Activated B cell treated with CpG ODN at 0.5 μM for 24 hours (primary cell): ENCODE measurements at regions of chr5 and their contacts with region 1.

Region 1: GRCh38 chr5:54310433-54311175 is at the start of gene ARL15:
- DNase-seq: peak; percentile 93
- ATAC-seq: peak; percentile 95
- H3K4me3 Mint-ChIP-seq: peak within 1 kb of the TSS; percentile 97
- H3K27ac Mint-ChIP-seq: peak within 1 kb of the TSS; percentile 91
- H3K4me1 Mint-ChIP-seq: peaks cover 24% of the 10 kb centered on the region
- H3K27me3 Mint-ChIP-seq: peaks cover 4% of the 10 kb centered on the region
- CTCF ChIP-seq: no peak
- total RNA-seq, gene ARL15: 13.0 and 17.5 TPM in 2 replicates

Region 2: GRCh38 chr5:53109443-53110127 is 1201.0 kb before region 1 on chr5 and contains the start of gene MOCS2:
- CTCF ChIA-PET with region 1: interaction called, 4 read pairs
- POLR2A ChIA-PET with region 1: no interaction called
- intact Hi-C with region 1: loop called (anchors 1 kb)
- DNase-seq: peak; percentile 89
- ATAC-seq: peak; percentile 98
- H3K4me3 Mint-ChIP-seq: peak within 1 kb of the TSS; percentile 95
- H3K27ac Mint-ChIP-seq: peak within 1 kb of the TSS; percentile 92
- H3K4me1 Mint-ChIP-seq: peaks cover 28% of the 10 kb centered on the region
- H3K27me3 Mint-ChIP-seq: no peaks in the 10 kb centered on the region
- CTCF ChIP-seq: no peak
- total RNA-seq, gene MOCS2: 16.8 and 17.0 TPM in 2 replicates

Region 3: GRCh38 chr5:54243473-54244080 is 67.0 kb before region 1 on chr5:
- CTCF ChIA-PET with region 1: interaction called, 8 read pairs
- POLR2A ChIA-PET with region 1: interaction called, 4 read pairs
- intact Hi-C with region 1: loop called (anchors 2 kb)
- DNase-seq: no peak
- ATAC-seq: no peak
- H3K4me3 Mint-ChIP-seq: no peak overlapping the region
- H3K27ac Mint-ChIP-seq: no peak overlapping the region
- H3K4me1 Mint-ChIP-seq: peaks cover 2% of the 10 kb centered on the region
- H3K27me3 Mint-ChIP-seq: no peaks in the 10 kb centered on the region
- CTCF ChIP-seq: no peak

Region 4: GRCh38 chr5:54329731-54330709 is 19.4 kb after region 1 on chr5:
- CTCF ChIA-PET with region 1: no interaction called
- POLR2A ChIA-PET with region 1: no interaction called
- intact Hi-C with region 1: no loop called
- DNase-seq: no peak
- ATAC-seq: no peak
- H3K4me3 Mint-ChIP-seq: no peak overlapping the region
- H3K27ac Mint-ChIP-seq: no peak overlapping the region
- H3K4me1 Mint-ChIP-seq: no peaks in the 10 kb centered on the region
- H3K27me3 Mint-ChIP-seq: peaks cover 39% of the 10 kb centered on the region
- CTCF ChIP-seq: no peak

Region 5: DNA sequence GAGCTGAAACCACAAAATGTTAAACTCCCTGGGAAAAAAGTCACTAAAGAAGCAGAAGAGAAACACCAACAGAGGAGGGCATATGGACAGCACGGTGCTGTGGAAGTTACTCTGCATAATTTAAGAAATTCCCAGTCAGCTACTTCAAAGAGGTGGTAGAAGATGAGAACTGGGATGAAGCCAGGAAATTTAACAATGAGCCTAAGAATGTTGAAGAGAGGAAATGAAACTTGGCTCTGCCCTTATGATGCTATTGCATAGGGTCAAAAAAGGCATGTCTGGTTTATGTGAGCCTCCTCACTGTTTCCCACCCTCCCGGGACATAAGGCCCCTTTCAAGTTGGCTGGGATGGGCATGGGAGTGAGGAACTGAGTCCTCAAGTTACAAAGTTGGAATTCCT is 181.6 kb after region 1 on chr5:
- CTCF ChIA-PET with region 1: interaction called, 12 read pairs
- POLR2A ChIA-PET with region 1: interaction called, 7 read pairs
- intact Hi-C with region 1: loop called (anchors 1 kb)
- DNase-seq: no peak
- ATAC-seq: no peak
- H3K4me3 Mint-ChIP-seq: no peak overlapping the region
- H3K27ac Mint-ChIP-seq: no peak overlapping the region
- H3K4me1 Mint-ChIP-seq: no peaks in the 10 kb centered on the region
- H3K27me3 Mint-ChIP-seq: peaks cover 9% of the 10 kb centered on the region
- CTCF ChIP-seq: no peak

Region 6: DNA sequence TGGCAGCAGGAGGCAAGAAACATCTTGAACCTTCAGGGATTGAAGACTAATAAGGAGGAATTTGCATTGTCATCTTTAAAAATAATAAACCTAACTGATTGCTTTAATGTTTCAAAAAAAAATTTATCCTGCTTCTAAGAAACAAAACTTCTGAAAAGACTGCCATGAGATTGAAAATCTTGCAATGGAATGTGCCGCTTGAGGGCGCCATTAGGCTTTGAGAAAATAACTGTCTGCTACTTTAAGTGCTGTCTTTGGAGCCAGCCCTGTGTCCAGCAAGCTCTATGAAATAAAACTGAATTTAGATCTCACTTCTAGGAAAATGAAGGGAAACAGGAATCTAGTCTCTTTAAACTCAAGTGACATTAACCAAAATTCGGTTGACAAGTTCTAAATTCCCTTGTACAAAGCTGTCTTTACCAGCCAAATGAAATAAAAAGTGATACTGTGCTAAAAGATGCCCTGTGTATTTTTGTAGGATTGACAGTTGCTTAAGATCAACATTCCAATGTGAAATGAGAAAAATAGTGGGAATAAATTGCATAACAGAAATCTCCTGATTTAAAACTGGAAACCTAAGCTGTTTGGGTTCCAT is 595.4 kb after region 1 on chr5:
- CTCF ChIA-PET with region 1: no interaction called
- POLR2A ChIA-PET with region 1: no interaction called
- intact Hi-C with region 1: loop called (anchors 2 kb)
- DNase-seq: no peak
- ATAC-seq: no peak
- H3K4me3 Mint-ChIP-seq: no peak overlapping the region
- H3K27ac Mint-ChIP-seq: no peak overlapping the region
- H3K4me1 Mint-ChIP-seq: peaks cover 11% of the 10 kb centered on the region
- H3K27me3 Mint-ChIP-seq: peaks cover 48% of the 10 kb centered on the region
- CTCF ChIP-seq: no peak

Region 7: GRCh38 chr5:55004729-55005128 is 694.1 kb after region 1 on chr5:
- CTCF ChIA-PET with region 1: no interaction called
- POLR2A ChIA-PET with region 1: no interaction called
- intact Hi-C with region 1: no loop called
- DNase-seq: no peak
- ATAC-seq: no peak
- H3K4me3 Mint-ChIP-seq: no peak overlapping the region
- H3K27ac Mint-ChIP-seq: no peak overlapping the region
- H3K4me1 Mint-ChIP-seq: no peaks in the 10 kb centered on the region
- H3K27me3 Mint-ChIP-seq: peaks cover 6% of the 10 kb centered on the region
- CTCF ChIP-seq: no peak

Region 8: DNA sequence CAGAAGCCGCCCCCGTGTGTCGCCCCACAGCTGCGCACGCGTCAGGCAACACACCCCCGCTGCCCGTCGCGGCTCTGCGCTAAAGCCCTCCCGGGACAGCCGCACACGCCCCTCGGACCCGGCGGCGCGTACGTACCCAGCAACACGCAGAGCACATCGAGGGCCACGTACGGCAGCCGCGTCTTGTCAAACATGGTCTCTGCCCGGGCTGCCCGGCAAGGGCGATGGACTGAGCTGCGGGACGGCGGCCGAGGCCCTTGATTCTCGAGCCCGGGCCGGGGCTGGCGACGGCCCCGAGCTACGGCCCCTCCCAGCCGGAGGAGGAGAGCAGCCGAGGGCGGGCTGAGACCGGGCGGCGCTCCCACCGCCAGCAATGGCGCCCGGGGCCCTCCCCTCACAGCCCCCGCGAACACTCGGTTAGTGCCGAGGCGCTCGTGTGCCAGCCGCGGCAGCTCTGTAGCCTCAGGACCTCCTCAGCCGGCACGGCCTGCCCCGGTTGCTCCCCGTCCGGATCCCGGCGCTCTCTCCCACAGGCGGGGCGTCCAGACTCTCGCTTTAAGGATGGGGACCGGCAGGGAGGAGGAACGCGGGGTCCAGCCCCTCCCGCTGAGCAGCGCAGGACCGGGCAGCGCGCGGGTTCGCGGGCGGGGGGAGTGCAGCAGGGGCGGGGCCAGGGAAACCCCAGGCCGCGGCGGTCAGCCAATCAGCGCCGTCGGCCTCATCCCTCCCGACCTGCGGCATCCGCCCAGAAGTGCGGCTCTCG is 1224.0 kb after region 1 on chr5 and contains the start of gene PLPP1:
- CTCF ChIA-PET with region 1: no interaction called
- POLR2A ChIA-PET with region 1: interaction called, 10 read pairs
- intact Hi-C with region 1: loop called (anchors 5 kb)
- DNase-seq: peak; percentile 89
- ATAC-seq: peak; percentile 79
- H3K4me3 Mint-ChIP-seq: peak within 1 kb of the TSS; percentile 90
- H3K27ac Mint-ChIP-seq: peak within 1 kb of the TSS; percentile 87
- H3K4me1 Mint-ChIP-seq: peaks cover 25% of the 10 kb centered on the region
- H3K27me3 Mint-ChIP-seq: no peaks in the 10 kb centered on the region
- CTCF ChIP-seq: no peak
- total RNA-seq, gene PLPP1: 10.3 and 12.0 TPM in 2 replicates